ENCODE measurements at regions of chr6 and their contacts with region 1.

Region 1: DNA sequence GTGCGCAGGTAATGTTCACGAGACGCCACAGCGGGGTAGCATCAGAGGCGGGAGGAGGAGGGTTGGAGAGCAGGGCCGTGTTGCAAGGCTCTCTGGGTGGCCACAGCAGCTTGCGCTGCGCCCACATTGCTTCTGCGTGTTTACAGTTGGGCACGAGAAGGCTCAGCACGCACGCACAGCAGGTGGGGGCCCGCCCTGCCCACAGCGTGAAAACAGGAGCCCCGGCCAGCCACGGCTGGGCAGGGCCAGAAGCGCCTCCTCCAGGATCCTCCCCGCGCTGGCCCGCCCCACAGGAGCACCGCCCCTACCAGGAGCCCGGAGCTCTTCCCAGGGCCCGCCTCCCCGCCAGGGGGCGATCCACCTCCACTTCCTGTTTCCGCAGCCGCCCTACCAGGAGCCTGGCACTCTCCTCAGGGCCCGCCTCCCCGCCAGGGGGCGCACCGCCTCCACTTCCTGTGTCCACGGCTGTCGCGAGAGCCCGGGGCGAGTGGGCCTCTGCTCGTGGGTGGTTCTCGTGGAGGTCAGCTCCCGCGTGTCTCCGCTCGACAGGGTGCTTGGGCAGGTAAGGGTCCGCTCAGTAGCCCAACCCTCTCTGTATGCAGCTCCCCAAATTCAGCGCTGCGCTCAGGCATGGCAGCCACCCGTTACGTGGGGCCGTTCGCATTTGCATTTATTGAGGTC is at the start of gene FAM50B:
- DNase-seq: peak; percentile 84 to 96 (median 91)
- ATAC-seq: peak; percentile 94
- H3K4me3 ChIP-seq: peak within 1 kb of the TSS; percentile 74
- H3K4me3 Mint-ChIP-seq: peak within 1 kb of the TSS; percentile 78
- H3K27ac ChIP-seq: peak within 1 kb of the TSS in 1 of 2 donors; percentile 58
- H3K27ac Mint-ChIP-seq: peak within 1 kb of the TSS; percentile 83
- H3K4me1 ChIP-seq: peaks cover 34% of the 10 kb centered on the region
- H3K4me1 Mint-ChIP-seq: peaks cover 20% of the 10 kb centered on the region
- H3K27me3 ChIP-seq: no peaks in the 10 kb centered on the region
- H3K27me3 Mint-ChIP-seq: no peaks in the 10 kb centered on the region
- CTCF ChIP-seq: peak; percentile 89
- total RNA-seq, gene FAM50B: 2.7 to 2.8 TPM

Region 2: DNA sequence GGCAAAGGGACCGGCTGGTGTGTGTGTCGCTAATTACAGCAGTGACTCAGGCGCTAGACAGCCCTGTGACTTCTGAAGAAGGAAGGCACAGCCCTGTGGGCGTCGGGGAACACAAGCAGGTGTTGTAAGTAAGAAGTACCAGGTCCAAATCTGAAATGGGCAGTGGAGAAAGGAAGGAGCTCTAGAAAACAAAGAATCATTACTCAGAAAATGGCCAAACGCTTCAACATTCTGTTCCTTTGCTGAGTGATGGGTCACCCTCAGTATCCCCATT is 204.4 kb before region 1 on chr6:
- CTCF ChIA-PET with region 1: no interaction called
- POLR2A ChIA-PET with region 1: no interaction called
- intact Hi-C with region 1: no loop called
- DNase-seq: no peak
- ATAC-seq: no peak
- H3K4me3 ChIP-seq: no peak overlapping the region
- H3K4me3 Mint-ChIP-seq: no peak overlapping the region
- H3K27ac ChIP-seq: no peak overlapping the region
- H3K27ac Mint-ChIP-seq: no peak overlapping the region
- H3K4me1 ChIP-seq: no peaks in the 10 kb centered on the region
- H3K4me1 Mint-ChIP-seq: no peaks in the 10 kb centered on the region
- H3K27me3 ChIP-seq: peaks cover 0 to 2% of the 10 kb centered on the region in 2 experiments
- H3K27me3 Mint-ChIP-seq: peaks cover 24% of the 10 kb centered on the region
- CTCF ChIP-seq: no peak

Region 3: GRCh38 chr6:3868544-3868943 is 19.5 kb after region 1 on chr6:
- CTCF ChIA-PET with region 1: interaction called, 3 read pairs
- POLR2A ChIA-PET with region 1: interaction called, 10 read pairs
- intact Hi-C with region 1: no loop called
- DNase-seq: no peak
- ATAC-seq: no peak
- H3K4me3 ChIP-seq: no peak overlapping the region
- H3K4me3 Mint-ChIP-seq: no peak overlapping the region
- H3K27ac ChIP-seq: no peak overlapping the region
- H3K27ac Mint-ChIP-seq: no peak overlapping the region
- H3K4me1 ChIP-seq: peaks cover 38% of the 10 kb centered on the region
- H3K4me1 Mint-ChIP-seq: peaks cover 33% of the 10 kb centered on the region
- H3K27me3 ChIP-seq: peaks cover 0 to 8% of the 10 kb centered on the region in 2 experiments
- H3K27me3 Mint-ChIP-seq: peaks cover 11% of the 10 kb centered on the region
- CTCF ChIP-seq: no peak

Region 4: DNA sequence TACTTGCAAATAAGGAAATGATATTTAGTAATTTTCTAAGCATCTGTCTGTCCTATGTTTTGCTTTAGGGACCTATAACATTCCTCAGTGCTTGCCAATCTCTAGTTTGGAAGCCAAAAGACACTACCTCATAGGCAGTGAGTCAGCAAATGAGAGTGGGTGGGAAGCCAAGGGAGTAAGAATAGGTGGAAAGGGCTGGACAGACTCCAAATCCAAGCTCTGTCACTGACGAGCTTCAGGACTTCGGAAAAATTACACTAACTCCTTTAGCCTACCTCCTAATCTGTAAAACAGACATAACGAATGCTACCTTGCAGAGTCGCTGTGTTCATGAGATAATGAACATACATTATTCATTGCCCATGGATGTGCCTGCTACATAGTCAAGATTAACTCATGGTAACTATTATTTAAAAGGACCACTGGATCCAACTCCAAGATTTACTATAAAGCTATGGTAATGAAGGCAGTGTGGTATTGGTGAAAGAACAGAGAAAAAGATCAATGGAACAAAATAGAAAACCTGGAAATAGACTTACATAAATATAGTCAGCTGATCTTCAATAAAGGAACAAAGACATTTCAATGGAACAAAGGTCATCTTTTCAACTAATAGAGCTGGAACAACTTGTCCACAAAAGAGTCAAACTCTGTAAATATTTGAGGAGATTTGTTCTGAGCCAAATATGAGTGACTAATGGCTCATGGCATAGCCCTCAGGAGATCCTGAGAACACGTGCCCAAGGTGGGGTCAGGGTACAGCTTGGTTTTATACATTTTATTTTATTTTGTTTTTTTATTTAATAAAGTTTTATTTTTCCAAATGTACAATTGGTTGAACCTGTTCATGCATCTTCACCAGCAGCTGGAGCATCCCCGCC is 64.3 kb after region 1 on chr6:
- CTCF ChIA-PET with region 1: no interaction called
- POLR2A ChIA-PET with region 1: interaction called, 9 read pairs
- intact Hi-C with region 1: loop called in 1 of 2 experiments (anchors 10 kb)
- DNase-seq: no peak
- ATAC-seq: no peak
- H3K4me3 ChIP-seq: no peak overlapping the region
- H3K4me3 Mint-ChIP-seq: no peak overlapping the region
- H3K27ac ChIP-seq: no peak overlapping the region
- H3K27ac Mint-ChIP-seq: no peak overlapping the region
- H3K4me1 ChIP-seq: peaks cover 26% of the 10 kb centered on the region
- H3K4me1 Mint-ChIP-seq: peaks cover 60% of the 10 kb centered on the region
- H3K27me3 ChIP-seq: peaks cover 24 to 28% of the 10 kb centered on the region in 2 experiments
- H3K27me3 Mint-ChIP-seq: peaks cover 39% of the 10 kb centered on the region
- CTCF ChIP-seq: no peak

Region 5: GRCh38 chr6:3929281-3929798 is 80.3 kb after region 1 on chr6:
- CTCF ChIA-PET with region 1: no interaction called
- POLR2A ChIA-PET with region 1: interaction called, 12 read pairs
- intact Hi-C with region 1: loop called (anchors 1 to 5 kb)
- DNase-seq: no peak
- ATAC-seq: no peak
- H3K4me3 ChIP-seq: no peak overlapping the region
- H3K4me3 Mint-ChIP-seq: no peak overlapping the region
- H3K27ac ChIP-seq: no peak overlapping the region
- H3K27ac Mint-ChIP-seq: no peak overlapping the region
- H3K4me1 ChIP-seq: peaks cover 4% of the 10 kb centered on the region
- H3K4me1 Mint-ChIP-seq: no peaks in the 10 kb centered on the region
- H3K27me3 ChIP-seq: no peaks in the 10 kb centered on the region
- H3K27me3 Mint-ChIP-seq: peaks cover 5% of the 10 kb centered on the region
- CTCF ChIP-seq: no peak

Region 6: GRCh38 chr6:4560116-4560812 is 711.2 kb after region 1 on chr6:
- CTCF ChIA-PET with region 1: no interaction called
- POLR2A ChIA-PET with region 1: no interaction called
- intact Hi-C with region 1: no loop called
- DNase-seq: peak in 1 of 14 experiments; percentile 2
- ATAC-seq: no peak
- H3K4me3 ChIP-seq: no peak overlapping the region
- H3K4me3 Mint-ChIP-seq: no peak overlapping the region
- H3K27ac ChIP-seq: no peak overlapping the region
- H3K27ac Mint-ChIP-seq: no peak overlapping the region
- H3K4me1 ChIP-seq: no peaks in the 10 kb centered on the region
- H3K4me1 Mint-ChIP-seq: no peaks in the 10 kb centered on the region
- H3K27me3 ChIP-seq: no peaks in the 10 kb centered on the region
- H3K27me3 Mint-ChIP-seq: peaks cover 8% of the 10 kb centered on the region
- CTCF ChIP-seq: no peak

Measured in CD4-positive, alpha-beta T cell (primary cell).